CD4-positive, alpha-beta T cell (primary cell): ENCODE measurements at regions of chr12 and their contacts with region 1.

Region 1: GRCh38 chr12:75944097-75944904 is 87.3 kb downstream of the PHLDA1 start:
- DNase-seq: peak in 4 of 14 experiments; percentile 30 to 65 (median 56)
- ATAC-seq: peak; percentile 88
- H3K4me3 ChIP-seq: no peak overlapping the region
- H3K4me3 Mint-ChIP-seq: peak overlapping the region; percentile 46
- H3K27ac ChIP-seq: peak overlapping the region in 1 of 2 donors; percentile 31
- H3K27ac Mint-ChIP-seq: peak overlapping the region; percentile 77
- H3K4me1 ChIP-seq: peaks cover 14% of the 10 kb centered on the region
- H3K4me1 Mint-ChIP-seq: peaks cover 15% of the 10 kb centered on the region
- H3K27me3 ChIP-seq: no peaks in the 10 kb centered on the region
- H3K27me3 Mint-ChIP-seq: no peaks in the 10 kb centered on the region
- CTCF ChIP-seq: no peak

Region 2: DNA sequence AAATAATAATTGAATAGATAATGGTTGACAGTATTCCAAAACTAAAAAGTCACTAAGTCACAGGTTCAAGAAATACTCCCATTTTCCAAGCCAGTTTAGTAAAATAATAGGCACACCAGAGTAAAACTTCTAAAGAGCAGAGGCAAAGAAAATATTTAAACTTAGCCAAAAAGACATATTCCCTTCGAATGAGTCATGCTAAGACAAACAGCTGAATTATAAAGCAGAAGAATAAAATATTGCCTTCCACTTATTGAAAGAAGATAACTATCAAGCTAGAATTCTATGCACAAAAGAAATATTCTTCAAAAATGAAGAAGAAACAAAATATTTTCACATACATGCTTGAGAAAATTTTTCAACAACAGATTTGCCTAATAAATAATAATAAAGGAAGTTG is 718.8 kb before region 1 on chr12:
- CTCF ChIA-PET with region 1: no interaction called
- POLR2A ChIA-PET with region 1: no interaction called
- intact Hi-C with region 1: no loop called
- DNase-seq: no peak
- ATAC-seq: no peak
- H3K4me3 ChIP-seq: no peak overlapping the region
- H3K4me3 Mint-ChIP-seq: no peak overlapping the region
- H3K27ac ChIP-seq: no peak overlapping the region
- H3K27ac Mint-ChIP-seq: no peak overlapping the region
- H3K4me1 ChIP-seq: no peaks in the 10 kb centered on the region
- H3K4me1 Mint-ChIP-seq: no peaks in the 10 kb centered on the region
- H3K27me3 ChIP-seq: no peaks in the 10 kb centered on the region
- H3K27me3 Mint-ChIP-seq: peaks cover 5% of the 10 kb centered on the region
- CTCF ChIP-seq: no peak

Region 3: GRCh38 chr12:75923964-75924666 is 20.2 kb before region 1 on chr12:
- CTCF ChIA-PET with region 1: no interaction called
- POLR2A ChIA-PET with region 1: no interaction called
- intact Hi-C with region 1: no loop called
- DNase-seq: no peak
- ATAC-seq: no peak
- H3K4me3 ChIP-seq: no peak overlapping the region
- H3K4me3 Mint-ChIP-seq: no peak overlapping the region
- H3K27ac ChIP-seq: no peak overlapping the region
- H3K27ac Mint-ChIP-seq: no peak overlapping the region
- H3K4me1 ChIP-seq: no peaks in the 10 kb centered on the region
- H3K4me1 Mint-ChIP-seq: no peaks in the 10 kb centered on the region
- H3K27me3 ChIP-seq: no peaks in the 10 kb centered on the region
- H3K27me3 Mint-ChIP-seq: no peaks in the 10 kb centered on the region
- CTCF ChIP-seq: no peak

Region 4: GRCh38 chr12:75969768-75970167 is 25.5 kb after region 1 on chr12:
- CTCF ChIA-PET with region 1: no interaction called
- POLR2A ChIA-PET with region 1: no interaction called
- intact Hi-C with region 1: loop called in 1 of 2 experiments (anchors 2 kb)
- DNase-seq: peak in 2 of 14 experiments; percentile 55 to 63
- ATAC-seq: no peak
- H3K4me3 ChIP-seq: no peak overlapping the region
- H3K4me3 Mint-ChIP-seq: no peak overlapping the region
- H3K27ac ChIP-seq: no peak overlapping the region
- H3K27ac Mint-ChIP-seq: no peak overlapping the region
- H3K4me1 ChIP-seq: no peaks in the 10 kb centered on the region
- H3K4me1 Mint-ChIP-seq: no peaks in the 10 kb centered on the region
- H3K27me3 ChIP-seq: no peaks in the 10 kb centered on the region
- H3K27me3 Mint-ChIP-seq: no peaks in the 10 kb centered on the region
- CTCF ChIP-seq: no peak